ENCODE measurements at regions of chr4 and their contacts with region 1.

Region 1: DNA sequence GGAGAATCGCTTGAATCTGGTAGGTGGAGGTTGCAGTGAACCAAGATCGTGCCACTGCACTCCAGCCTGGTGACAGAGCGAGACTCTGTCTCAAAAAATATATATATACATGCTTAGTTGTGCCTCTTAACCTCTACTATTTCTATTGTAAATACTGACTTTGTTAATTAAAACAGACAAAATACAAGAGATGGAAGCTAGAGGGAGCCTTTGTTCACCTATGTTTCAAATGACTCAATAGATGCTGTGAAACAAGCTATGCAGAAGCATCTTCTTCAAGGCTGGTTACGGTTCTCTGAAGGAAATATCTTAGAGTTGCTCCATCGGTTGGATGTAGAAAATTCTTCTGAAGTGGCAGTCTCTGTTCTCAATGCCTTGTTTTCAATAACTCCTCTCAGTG is 6.2 kb downstream of the NCAPG start:
- DNase-seq: no peak

Region 2: GRCh38 chr4:18366892-18367291 is 549.9 kb after region 1 on chr4:
- intact Hi-C with region 1: loop called (anchors 5 kb)
- DNase-seq: no peak